ENCODE measurements at regions of chr2 and their contacts with region 1.

Region 1: DNA sequence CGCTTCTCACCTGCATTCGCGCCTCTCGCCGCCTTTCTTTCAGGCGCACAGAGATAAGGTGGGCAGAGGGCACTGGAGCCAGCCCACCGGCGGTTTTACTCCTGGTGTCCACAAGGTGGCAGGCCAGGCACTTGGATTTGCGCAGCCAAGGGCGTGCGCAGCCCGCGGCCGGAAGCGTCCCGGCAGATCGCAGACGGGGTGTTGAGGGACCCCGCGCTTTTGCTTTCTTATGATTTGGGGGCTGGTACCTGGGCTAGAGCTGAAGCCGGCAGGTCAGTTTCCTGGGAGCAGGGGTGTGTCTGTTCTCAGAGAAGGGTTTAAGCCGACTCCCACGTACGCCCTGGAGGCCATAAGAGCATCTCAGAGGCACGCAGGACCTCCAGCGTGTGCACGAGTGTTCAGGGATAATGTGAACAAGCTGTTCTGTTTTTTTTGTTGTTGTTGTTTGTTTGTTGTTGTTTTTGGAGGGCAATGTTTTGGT is 305.6 kb upstream of the CXCR4 start:
- DNase-seq: peak; percentile 62 to 85 (median 85)
- ATAC-seq: peak; percentile 94
- H3K4me3 ChIP-seq: peak overlapping the region; percentile 52
- H3K27ac ChIP-seq: no peak overlapping the region
- H3K4me1 ChIP-seq: no peaks in the 10 kb centered on the region
- H3K27me3 ChIP-seq: peaks cover 3% of the 10 kb centered on the region

Region 2: DNA sequence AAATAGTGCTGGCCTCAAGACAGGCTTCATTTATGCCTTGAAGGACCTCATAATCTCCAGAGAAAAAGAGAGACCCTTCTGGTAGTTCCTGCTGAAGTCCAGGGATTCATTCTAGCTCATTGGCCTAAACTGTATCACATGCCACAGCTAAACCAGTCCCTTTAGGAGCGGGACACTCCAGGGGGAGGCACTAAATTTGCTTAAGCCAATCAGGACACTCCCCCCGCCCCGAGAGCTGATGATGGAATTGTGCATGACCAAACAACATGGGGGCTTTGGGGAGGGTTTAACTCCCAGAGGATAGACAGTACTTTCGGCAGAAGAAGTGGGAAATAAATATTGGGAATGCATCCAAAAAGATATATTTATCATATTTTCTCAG is 269.2 kb before region 1 on chr2:
- intact Hi-C with region 1: no loop called
- DNase-seq: no peak
- ATAC-seq: no peak
- H3K4me3 ChIP-seq: no peak overlapping the region
- H3K27ac ChIP-seq: no peak overlapping the region
- H3K4me1 ChIP-seq: no peaks in the 10 kb centered on the region
- H3K27me3 ChIP-seq: no peaks in the 10 kb centered on the region

Region 3: GRCh38 chr2:136738044-136738443 is 314.5 kb after region 1 on chr2:
- intact Hi-C with region 1: loop called in 1 of 4 experiments (anchors 10 kb)
- DNase-seq: no peak
- ATAC-seq: no peak
- H3K4me3 ChIP-seq: no peak overlapping the region
- H3K27ac ChIP-seq: no peak overlapping the region
- H3K4me1 ChIP-seq: peaks cover 1% of the 10 kb centered on the region
- H3K27me3 ChIP-seq: no peaks in the 10 kb centered on the region

Region 4: DNA sequence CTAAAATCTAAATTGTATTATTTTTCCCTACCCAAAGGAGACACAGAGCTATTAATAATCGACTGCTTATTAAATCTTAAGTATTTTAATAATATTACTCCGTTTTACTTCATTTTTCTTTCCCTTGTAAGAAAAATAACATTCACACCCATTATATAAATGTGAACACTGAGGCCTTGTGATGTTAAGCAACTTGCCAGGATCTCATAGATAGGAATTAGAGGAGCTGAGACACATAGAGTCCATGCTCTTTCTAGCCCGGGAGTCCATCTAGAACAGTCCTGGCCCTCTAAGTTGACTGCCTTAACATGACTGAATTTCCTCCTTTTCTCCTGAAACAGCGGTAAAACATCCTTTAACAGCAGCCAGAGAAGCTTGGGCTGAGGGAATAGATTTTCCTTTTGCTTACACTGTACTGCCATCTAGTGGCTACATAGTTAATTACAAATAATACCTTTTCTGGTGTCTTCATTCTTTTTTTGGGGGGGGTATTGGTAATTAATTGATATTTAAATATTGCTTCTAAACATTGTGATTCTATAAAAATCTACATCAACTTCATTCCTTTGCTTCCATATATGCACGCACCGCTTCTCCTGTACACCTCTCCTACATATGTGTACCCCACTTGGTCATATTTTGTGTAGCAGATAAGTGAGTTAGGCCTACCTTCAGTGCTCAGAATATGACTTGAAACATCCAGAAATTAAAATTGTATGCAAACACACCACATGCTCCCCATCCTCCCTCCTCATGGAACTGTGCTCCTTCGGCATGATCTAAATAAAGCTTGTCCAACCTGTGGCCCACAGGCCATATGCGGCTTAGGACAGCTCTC is 1414.9 kb after region 1 on chr2:
- intact Hi-C with region 1: loop called in 3 of 4 experiments (anchors 5 to 10 kb)
- DNase-seq: no peak
- ATAC-seq: peak in 1 of 2 donors; percentile 25
- H3K4me3 ChIP-seq: no peak overlapping the region
- H3K27ac ChIP-seq: no peak overlapping the region
- H3K4me1 ChIP-seq: no peaks in the 10 kb centered on the region
- H3K27me3 ChIP-seq: no peaks in the 10 kb centered on the region

Measured in right cardiac atrium (tissue), 5 donors.